ENCODE measurements at regions of chr2 and their contacts with region 1.

Region 1: GRCh38 chr2:191051825-191052778 is 38.1 kb upstream of the STAT1 start:
- DNase-seq: no peak
- H3K4me3 Mint-ChIP-seq: no peak overlapping the region
- H3K27ac Mint-ChIP-seq: no peak overlapping the region
- H3K4me1 Mint-ChIP-seq: peaks cover 19% of the 10 kb centered on the region
- H3K27me3 Mint-ChIP-seq: no peaks in the 10 kb centered on the region

Region 2: GRCh38 chr2:191030521-191031154 is 21.5 kb before region 1 on chr2:
- CTCF ChIA-PET with region 1: interaction called, 13 read pairs
- intact Hi-C with region 1: no loop called
- DNase-seq: peak; percentile 59
- H3K4me3 Mint-ChIP-seq: no peak overlapping the region
- H3K27ac Mint-ChIP-seq: peak overlapping the region; percentile 44
- H3K4me1 Mint-ChIP-seq: peaks cover 48% of the 10 kb centered on the region
- H3K27me3 Mint-ChIP-seq: no peaks in the 10 kb centered on the region

Region 3: DNA sequence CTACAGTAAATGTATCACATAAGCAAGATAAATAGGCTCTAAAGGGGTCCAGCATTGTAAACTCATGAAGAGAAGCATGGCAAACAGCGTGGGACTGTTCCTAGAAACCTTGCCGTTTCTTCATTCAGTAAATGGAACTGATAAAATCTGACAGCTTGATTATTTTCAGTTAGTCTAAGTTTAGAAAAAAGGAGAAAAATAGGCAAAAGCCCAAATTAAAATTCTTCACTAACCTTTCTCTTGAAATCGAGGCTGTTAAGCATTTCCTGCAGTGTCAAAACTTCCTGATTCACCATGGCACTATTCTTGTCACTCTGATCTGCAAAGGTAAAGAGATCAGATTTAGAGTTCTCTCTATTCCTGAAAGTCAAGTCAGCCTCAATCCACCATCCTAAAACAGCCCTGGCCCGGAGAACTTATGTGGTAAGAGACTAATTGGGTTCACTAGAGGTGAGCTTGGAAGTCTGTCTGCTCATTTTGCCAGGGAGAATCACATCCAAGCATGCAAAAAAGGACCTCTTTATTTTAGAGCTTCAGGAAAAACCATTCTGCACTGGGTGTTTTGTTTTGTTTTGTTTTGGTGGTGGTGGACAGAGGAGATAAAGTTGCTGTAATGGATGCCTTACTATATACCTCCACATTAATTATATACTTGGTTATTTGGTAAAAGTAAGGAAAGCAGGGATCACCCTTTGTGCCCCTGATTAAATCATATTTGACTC is 14.3 kb after region 1 on chr2:
- CTCF ChIA-PET with region 1: interaction called, 62 read pairs
- intact Hi-C with region 1: no loop called
- DNase-seq: peak; percentile 41
- H3K4me3 Mint-ChIP-seq: peak overlapping the region; percentile 25
- H3K27ac Mint-ChIP-seq: peak overlapping the region; percentile 76
- H3K4me1 Mint-ChIP-seq: peaks cover 77% of the 10 kb centered on the region
- H3K27me3 Mint-ChIP-seq: no peaks in the 10 kb centered on the region

Region 4: DNA sequence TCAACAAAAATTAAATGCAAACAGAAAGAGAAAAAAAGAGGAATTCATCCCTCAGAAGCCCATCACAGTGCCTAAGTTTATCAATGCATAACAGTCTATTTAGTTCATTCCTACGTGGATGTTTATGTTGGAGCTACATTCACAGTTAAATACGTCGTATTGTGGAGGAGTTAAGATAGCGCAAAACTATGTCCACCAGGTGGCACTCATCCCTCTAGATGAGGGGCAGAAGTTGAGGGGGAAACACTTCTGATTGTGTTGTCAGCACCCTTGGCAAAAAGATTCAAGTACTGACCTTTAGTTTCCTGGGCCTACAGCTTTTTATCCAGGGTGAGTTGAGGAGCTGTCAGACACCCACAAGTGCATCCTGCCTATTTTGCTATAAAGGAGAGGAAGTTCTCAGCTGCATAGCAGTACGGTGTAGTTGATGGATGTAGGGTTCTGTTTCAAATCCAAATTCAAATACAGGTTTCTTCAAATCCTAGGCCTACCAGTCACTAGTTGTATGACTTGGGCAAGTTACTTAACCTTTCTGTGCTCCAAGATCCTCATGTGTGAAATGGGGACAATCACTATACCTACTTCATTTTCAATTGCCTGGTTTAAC is 166.3 kb after region 1 on chr2:
- CTCF ChIA-PET with region 1: interaction called, 11 read pairs
- intact Hi-C with region 1: no loop called
- DNase-seq: peak; percentile 67
- H3K4me3 Mint-ChIP-seq: no peak overlapping the region
- H3K27ac Mint-ChIP-seq: no peak overlapping the region
- H3K4me1 Mint-ChIP-seq: peaks cover 25% of the 10 kb centered on the region
- H3K27me3 Mint-ChIP-seq: no peaks in the 10 kb centered on the region

Region 5: GRCh38 chr2:191501561-191502168 is 449.6 kb after region 1 on chr2:
- CTCF ChIA-PET with region 1: no interaction called
- intact Hi-C with region 1: loop called (anchors 1 kb)
- DNase-seq: no peak
- H3K4me3 Mint-ChIP-seq: no peak overlapping the region
- H3K27ac Mint-ChIP-seq: no peak overlapping the region
- H3K4me1 Mint-ChIP-seq: no peaks in the 10 kb centered on the region
- H3K27me3 Mint-ChIP-seq: peaks cover 3% of the 10 kb centered on the region

Measured in activated naive CD4-positive, alpha-beta T cell treated with anti-CD3 and anti-CD28 coated beads for 36 hours (primary cell).